ENCODE measurements at regions of chr12 and their contacts with region 1.

Region 1: DNA sequence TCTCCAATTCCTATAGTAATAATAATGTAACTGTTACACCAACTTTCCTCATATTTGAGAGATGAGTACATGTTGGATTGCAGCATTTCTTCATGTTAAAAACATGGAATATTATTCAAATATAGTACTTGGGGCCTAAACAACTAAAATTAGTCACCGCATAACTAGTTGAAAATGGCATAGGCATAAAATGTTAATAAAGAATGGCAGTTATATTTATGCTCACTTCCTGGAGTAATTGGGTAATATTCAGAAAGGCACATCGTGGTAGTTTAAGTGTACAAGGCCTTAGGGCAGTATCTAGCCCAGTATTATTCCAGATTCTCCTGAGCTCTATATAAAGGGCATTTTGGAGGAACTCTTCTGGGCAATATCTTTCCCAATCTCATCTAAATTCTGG is 46.0 kb downstream of the ERGIC2 start:
- DNase-seq: no peak
- ATAC-seq: no peak
- H3K4me3 ChIP-seq: no peak overlapping the region
- H3K27ac ChIP-seq: no peak overlapping the region
- H3K4me1 ChIP-seq: no peaks in the 10 kb centered on the region
- H3K27me3 ChIP-seq: no peaks in the 10 kb centered on the region
- CTCF ChIP-seq: no peak

Region 2: GRCh38 chr12:29309320-29309902 is 25.5 kb before region 1 on chr12:
- CTCF ChIA-PET with region 1: no interaction called
- POLR2A ChIA-PET with region 1: no interaction called
- intact Hi-C with region 1: loop called (anchors 2 kb)
- DNase-seq: peak; percentile 73
- ATAC-seq: peak; percentile 83
- H3K4me3 ChIP-seq: no peak overlapping the region
- H3K27ac ChIP-seq: no peak overlapping the region
- H3K4me1 ChIP-seq: no peaks in the 10 kb centered on the region
- H3K27me3 ChIP-seq: no peaks in the 10 kb centered on the region
- CTCF ChIP-seq: peak; percentile 93

Region 3: DNA sequence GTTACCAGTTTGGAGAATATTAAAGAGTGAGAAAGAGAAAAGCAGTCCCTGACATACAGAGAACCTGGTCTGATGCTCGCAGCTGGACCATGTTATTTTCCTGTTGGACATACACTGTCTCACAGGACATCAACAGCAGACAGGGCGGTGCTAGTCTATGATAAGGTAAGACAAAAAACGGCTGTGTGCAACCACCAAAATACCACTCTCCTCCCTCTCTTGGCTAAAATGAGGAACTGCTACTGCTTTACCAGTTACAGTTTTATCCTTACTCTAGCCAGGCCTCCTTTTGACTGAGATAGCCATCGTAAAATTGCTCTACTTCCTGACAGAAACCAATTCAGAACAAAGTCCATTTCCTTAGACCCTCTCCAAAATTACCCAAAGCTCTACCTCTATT is 93.0 kb after region 1 on chr12:
- CTCF ChIA-PET with region 1: no interaction called
- POLR2A ChIA-PET with region 1: no interaction called
- intact Hi-C with region 1: loop called (anchors 5 kb)
- DNase-seq: peak; percentile 53
- ATAC-seq: peak; percentile 6; the same call in 1 of the 2 replicates
- H3K4me3 ChIP-seq: no peak overlapping the region
- H3K27ac ChIP-seq: peak overlapping the region; percentile 28
- H3K4me1 ChIP-seq: peaks cover 56% of the 10 kb centered on the region
- H3K27me3 ChIP-seq: no peaks in the 10 kb centered on the region
- CTCF ChIP-seq: peak; percentile 56

Measured in PC-3 (cell line).